ENCODE measurements at regions of chr1 and their contacts with region 1.

Region 1: DNA sequence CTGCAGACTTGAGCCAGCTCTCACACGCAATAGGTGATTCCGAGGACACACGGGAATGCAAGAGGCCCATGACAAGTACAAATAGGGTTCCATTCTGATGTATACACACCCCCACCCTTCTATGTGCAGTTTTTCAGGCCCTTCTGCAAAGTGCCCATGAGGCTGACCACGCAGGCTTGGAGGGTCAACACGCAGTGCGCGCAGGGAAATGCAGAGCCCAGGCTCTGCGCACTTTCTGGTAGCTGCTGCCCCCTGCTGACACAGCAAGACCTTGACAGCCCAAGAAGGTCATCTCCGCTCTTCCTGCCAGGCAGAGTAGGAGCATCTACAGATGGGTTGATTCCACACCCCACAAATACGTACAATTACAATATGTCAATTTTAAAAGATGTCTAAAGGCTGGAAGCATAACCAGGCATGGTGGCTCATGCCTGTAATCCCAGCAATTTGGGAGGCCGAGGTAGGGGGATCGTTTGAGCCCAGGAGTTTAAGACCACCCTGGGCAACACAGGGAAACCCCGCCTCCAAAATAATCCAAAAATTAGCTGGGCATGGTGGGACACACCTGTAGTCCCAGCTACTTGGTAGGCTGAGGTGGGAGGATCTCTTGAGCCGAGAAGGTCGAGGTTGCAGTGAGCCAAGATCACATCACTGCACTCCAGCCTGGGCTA is 18.5 kb downstream of the SH3BP5L start:
- DNase-seq: peak; percentile 42
- ATAC-seq: peak; percentile 94
- H3K4me3 ChIP-seq: no peak overlapping the region
- H3K27ac ChIP-seq: no peak overlapping the region
- H3K4me1 ChIP-seq: no peaks in the 10 kb centered on the region
- H3K27me3 ChIP-seq: no peaks in the 10 kb centered on the region
- CTCF ChIP-seq: peak; percentile 90

Region 2: DNA sequence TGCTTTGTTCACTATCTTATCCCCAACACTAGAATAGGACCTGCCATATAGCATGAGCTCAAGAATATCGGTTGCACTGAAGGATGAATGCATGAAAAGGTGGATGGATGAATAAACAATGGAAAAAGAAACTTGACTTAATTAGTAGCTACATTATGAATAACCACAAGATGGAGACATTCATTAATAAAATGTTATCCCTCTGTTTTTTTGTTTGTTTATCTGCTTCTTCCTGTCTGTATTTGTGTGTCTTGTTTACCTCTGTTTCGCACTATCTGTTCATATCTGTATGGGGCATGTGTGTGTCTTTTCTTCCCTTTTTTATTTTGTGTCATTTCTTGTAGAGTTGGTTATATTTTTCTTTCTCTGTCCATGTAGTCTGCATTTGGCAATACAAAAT is 103.5 kb before region 1 on chr1:
- CTCF ChIA-PET with region 1: interaction called, 5 read pairs
- POLR2A ChIA-PET with region 1: no interaction called
- in situ Hi-C with region 1: no loop called
- intact Hi-C with region 1: loop called (anchors 2 kb)
- DNase-seq: no peak
- ATAC-seq: no peak
- H3K4me3 ChIP-seq: no peak overlapping the region
- H3K27ac ChIP-seq: no peak overlapping the region
- H3K4me1 ChIP-seq: no peaks in the 10 kb centered on the region
- H3K27me3 ChIP-seq: no peaks in the 10 kb centered on the region
- CTCF ChIP-seq: peak; percentile 22; the same call in 1 of the 2 replicates